Activated CD8-positive, alpha-beta memory T cell treated with anti-CD3 and anti-CD28 coated beads, Interleukin-2, amount 10 ng/mL, durations not matched to agents 7 days and 5 days (primary cell): ENCODE measurements at regions of chr1 and their contacts with region 1.

Region 1: GRCh38 chr1:11693024-11693590 is 1.6 kb downstream of the DRAXIN start:
- DNase-seq: peak; percentile 85
- ATAC-seq: peak; percentile 82
- H3K4me3 Mint-ChIP-seq: peak overlapping the region; percentile 30
- H3K27ac Mint-ChIP-seq: peak overlapping the region; percentile 59
- H3K4me1 Mint-ChIP-seq: peaks cover 30% of the 10 kb centered on the region
- H3K27me3 Mint-ChIP-seq: peaks cover 49% of the 10 kb centered on the region

Region 2: DNA sequence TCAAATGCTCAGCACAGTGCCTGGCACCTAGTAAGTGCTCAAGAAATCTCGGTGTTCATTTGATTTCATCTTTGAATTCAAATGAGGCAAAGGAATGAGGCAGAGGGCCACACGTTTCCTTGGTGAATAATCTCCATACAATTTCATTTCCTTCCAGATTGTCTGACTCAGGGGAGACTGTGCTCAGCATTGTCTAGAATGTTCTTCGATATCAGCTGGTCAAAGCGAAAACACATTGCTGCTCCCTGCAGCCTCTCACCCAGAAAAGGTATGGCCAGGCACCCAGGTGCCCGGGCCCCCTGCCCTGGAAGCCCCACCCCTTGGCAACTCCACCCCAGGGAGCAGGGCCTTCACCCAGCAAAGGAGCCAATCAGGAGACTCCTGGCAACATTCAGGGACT is 94.6 kb before region 1 on chr1:
- CTCF ChIA-PET with region 1: no interaction called
- DNase-seq: no peak
- ATAC-seq: no peak
- H3K4me3 Mint-ChIP-seq: no peak overlapping the region
- H3K27ac Mint-ChIP-seq: no peak overlapping the region
- H3K4me1 Mint-ChIP-seq: no peaks in the 10 kb centered on the region
- H3K27me3 Mint-ChIP-seq: peaks cover 21% of the 10 kb centered on the region

Region 3: DNA sequence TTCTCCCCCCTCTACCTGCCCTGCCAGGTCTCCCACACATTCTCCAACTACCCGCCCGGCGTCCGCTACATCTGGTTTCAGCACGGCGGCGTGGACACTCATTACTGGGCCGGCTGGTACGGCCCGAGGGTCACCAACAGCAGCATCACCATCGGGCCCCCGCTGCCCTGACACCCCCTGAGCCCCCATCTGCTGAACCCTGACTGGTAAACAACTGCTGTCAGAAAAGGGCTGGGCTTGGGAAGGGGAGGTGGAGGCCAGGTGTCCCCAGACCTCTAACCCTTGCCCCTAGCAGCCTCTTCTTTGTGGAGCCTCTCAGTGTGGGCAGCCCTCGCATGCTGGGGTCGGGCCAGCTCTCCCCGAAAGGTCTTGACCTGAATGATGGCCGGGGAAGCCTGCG is 32.0 kb before region 1 on chr1:
- CTCF ChIA-PET with region 1: interaction called, 12 read pairs
- DNase-seq: no peak
- ATAC-seq: no peak
- H3K4me3 Mint-ChIP-seq: no peak overlapping the region
- H3K27ac Mint-ChIP-seq: no peak overlapping the region
- H3K4me1 Mint-ChIP-seq: peaks cover 9% of the 10 kb centered on the region
- H3K27me3 Mint-ChIP-seq: no peaks in the 10 kb centered on the region